ENCODE measurements at regions of chr16 and their contacts with region 1.

Region 1: GRCh38 chr16:75238132-75238852 is 13.1 kb downstream of the BCAR1 start:
- DNase-seq: peak; percentile 83 to 92
- ATAC-seq: peak; percentile 80 to 83 (median 82)
- H3K4me3 ChIP-seq: peak overlapping the region; percentile 28
- H3K27ac ChIP-seq: peak overlapping the region; percentile 83
- H3K4me1 ChIP-seq: peaks cover 67% of the 10 kb centered on the region
- H3K27me3 ChIP-seq: no peaks in the 10 kb centered on the region
- CTCF ChIP-seq: no peak

Region 2: DNA sequence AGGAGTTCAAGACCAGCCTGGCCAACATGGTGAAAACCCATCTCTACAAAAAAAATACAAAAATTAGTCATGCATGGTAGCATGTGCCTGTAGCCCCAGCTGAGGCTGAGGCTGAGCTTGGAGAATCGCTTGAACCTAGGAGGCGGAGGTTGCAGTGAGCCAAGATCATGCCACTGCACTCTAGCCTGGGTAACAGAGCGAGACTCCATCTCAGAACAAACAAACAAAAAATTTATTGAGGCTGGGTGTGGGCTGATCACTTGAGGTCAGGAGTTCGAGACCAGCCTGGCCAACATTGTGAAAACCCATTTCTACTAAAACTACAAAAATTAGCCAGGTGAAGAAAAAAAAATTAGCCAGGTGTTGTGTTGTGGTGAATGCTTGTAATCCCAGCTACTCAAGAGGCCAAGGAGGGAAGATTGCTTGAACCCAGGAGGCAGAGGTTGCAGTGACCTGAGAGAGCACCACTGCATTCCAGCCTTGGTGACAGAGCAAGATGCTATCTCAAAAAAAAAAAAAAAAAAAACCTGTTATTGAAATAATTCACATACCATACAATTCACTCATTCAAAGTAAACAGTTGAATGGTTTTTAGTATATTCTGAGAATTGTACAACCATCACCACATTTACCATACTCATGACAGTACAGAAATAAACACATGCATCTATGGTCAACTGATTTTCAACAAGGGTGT is 208.6 kb before region 1 on chr16:
- intact Hi-C with region 1: no loop called
- DNase-seq: no peak
- ATAC-seq: no peak
- H3K4me3 ChIP-seq: no peak overlapping the region
- H3K27ac ChIP-seq: no peak overlapping the region
- H3K4me1 ChIP-seq: peaks cover 26% of the 10 kb centered on the region
- H3K27me3 ChIP-seq: no peaks in the 10 kb centered on the region
- CTCF ChIP-seq: no peak

Region 3: DNA sequence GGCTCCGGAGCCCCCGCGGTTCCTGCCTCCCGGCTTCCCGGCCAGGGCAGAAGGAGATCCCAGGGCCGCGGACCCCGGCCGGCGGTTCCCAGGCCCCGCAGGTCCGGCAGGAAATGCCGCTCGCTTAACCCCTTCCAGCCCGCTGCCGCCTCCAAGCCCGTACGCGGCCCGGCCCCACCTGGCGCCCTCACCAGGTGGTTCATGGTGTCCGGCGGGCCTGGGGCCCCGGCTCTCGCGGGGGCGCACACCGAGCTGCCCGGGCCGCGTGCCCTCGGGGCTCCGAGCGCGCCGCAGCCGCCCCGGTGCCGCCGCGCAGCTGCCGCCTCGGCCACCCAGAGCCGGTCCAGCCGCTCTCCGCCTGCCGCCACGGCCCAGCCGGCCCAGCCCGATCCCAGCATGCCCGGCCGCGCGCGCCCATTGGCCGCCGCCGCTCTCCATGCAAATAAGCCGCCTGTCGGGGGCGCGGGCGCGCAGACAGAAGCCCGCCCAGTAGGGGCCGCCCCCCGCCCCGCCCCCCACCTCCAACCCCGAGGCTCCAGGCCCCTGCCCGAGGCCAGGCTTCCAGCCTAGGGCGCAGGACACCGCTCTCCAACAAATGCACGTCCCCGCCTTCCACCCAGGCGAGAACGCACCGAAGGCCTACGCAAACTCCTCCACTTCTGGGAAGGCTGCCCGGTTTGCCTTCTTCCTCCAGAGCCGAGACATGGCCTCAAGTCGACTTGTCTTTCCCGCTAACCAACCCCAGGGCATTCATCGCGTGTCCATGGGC is 13.2 kb after region 1 on chr16 and contains the start of gene BCAR1:
- intact Hi-C with region 1: loop called in 1 of 2 experiments (anchors 2 kb)
- DNase-seq: peak; percentile 90 to 92
- ATAC-seq: peak; percentile 54 to 59 (median 57)
- H3K4me3 ChIP-seq: peak within 1 kb of the TSS; percentile 78
- H3K27ac ChIP-seq: peak within 1 kb of the TSS; percentile 93
- H3K4me1 ChIP-seq: peaks cover 84% of the 10 kb centered on the region
- H3K27me3 ChIP-seq: no peaks in the 10 kb centered on the region
- CTCF ChIP-seq: peak; percentile 5
- total RNA-seq, gene BCAR1: 61.8 to 108 (median 90.1) TPM

Region 4: DNA sequence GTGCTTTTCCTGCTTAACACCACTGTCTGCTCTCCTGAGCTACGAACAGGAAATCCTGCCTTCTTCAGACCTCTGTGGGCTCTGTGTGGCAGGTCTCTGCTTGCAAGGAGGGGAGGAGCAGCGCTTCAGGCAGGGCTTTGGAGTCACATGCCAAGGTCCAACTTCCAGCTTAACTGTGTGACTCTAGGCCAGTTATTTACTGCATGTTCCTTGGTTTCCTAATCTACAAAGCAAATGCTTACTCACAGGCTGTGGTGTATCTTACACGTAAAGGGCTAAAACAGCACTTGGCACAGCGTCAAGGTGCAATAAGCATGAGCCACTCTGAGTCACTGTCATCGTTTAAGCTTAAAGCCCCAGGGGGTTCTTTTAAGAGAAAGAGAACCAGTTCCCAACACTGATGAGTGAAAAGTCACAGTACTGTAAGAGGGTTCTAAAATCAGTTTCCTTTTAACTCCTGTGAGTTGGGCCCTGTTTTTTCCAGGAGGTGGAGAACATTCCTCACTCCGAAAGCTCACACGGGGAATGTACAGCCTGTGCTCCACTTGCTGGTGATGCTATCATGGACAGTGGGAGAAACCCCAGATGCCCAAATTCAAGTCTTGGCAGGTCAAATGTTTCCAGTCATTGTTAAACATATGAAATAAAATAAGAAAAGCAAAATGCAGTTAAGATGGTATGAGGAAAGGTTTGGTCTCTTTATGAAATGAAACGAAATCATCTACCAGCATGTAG is 67.2 kb after region 1 on chr16:
- intact Hi-C with region 1: loop called in 1 of 2 experiments (anchors 5 kb)
- DNase-seq: peak; percentile 87 to 89
- ATAC-seq: peak; percentile 94 to 98 (median 97)
- H3K4me3 ChIP-seq: peak overlapping the region; percentile 29
- H3K27ac ChIP-seq: peak overlapping the region; percentile 93
- H3K4me1 ChIP-seq: peaks cover 25% of the 10 kb centered on the region
- H3K27me3 ChIP-seq: no peaks in the 10 kb centered on the region
- CTCF ChIP-seq: no peak

Region 5: GRCh38 chr16:75319513-75320411 is 81.5 kb after region 1 on chr16:
- intact Hi-C with region 1: loop called in 1 of 2 experiments (anchors 5 kb)
- DNase-seq: no peak
- ATAC-seq: no peak
- H3K4me3 ChIP-seq: no peak overlapping the region
- H3K27ac ChIP-seq: no peak overlapping the region
- H3K4me1 ChIP-seq: no peaks in the 10 kb centered on the region
- H3K27me3 ChIP-seq: no peaks in the 10 kb centered on the region
- CTCF ChIP-seq: no peak

Region 6: DNA sequence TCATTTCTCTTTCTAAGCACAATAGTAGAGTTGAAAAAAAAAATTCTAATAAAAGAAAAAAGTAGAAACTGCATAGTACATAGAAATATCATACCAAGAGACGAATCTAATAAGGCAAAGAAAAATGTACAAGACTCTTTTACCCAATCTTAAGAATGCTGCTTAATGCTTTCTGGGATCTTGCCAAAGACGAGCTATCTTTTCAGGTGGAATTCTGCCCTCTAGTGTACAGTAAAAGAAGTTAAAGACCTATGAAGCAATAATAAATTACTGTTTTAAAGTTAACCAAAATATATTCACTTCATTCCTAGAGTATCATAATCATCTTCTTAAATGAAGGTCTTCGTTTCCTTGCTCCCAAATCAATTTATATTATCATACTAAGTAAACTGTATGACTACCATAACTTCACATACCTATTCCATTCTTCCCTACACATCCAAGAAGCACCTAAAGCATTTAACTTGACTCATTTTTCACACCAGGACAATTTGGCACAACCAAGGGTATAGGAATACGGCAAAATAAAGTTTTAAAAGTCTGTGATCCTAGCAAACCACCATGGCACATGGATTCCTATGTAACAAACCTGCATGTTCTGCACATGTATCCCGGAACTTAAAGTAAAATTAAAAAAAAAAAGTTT is 147.3 kb after region 1 on chr16:
- intact Hi-C with region 1: loop called (anchors 2 to 5 kb)
- DNase-seq: no peak
- ATAC-seq: peak; percentile 44 to 80 (median 58)
- H3K4me3 ChIP-seq: no peak overlapping the region
- H3K27ac ChIP-seq: no peak overlapping the region
- H3K4me1 ChIP-seq: no peaks in the 10 kb centered on the region
- H3K27me3 ChIP-seq: no peaks in the 10 kb centered on the region
- CTCF ChIP-seq: peak; percentile 86